Gastrocnemius medialis (tissue), 4 donors: ENCODE measurements at regions of chr2 and their contacts with region 1.

Region 1: GRCh38 chr2:54704688-54705605 is 18.5 kb upstream of the EML6 start:
- DNase-seq: no peak
- ATAC-seq: peak; percentile 80 to 87
- H3K4me3 ChIP-seq: no peak overlapping the region
- H3K27ac ChIP-seq: peak overlapping the region in 1 of 4 donors; percentile 12
- H3K4me1 ChIP-seq: no peaks in the 10 kb centered on the region
- H3K27me3 ChIP-seq: peaks cover 0 to 3% (median 0%) of the 10 kb centered on the region in 3 donors
- CTCF ChIP-seq: peak; percentile 43 to 69 (median 58)
- POLR2A ChIP-seq: no peak

Region 2: DNA sequence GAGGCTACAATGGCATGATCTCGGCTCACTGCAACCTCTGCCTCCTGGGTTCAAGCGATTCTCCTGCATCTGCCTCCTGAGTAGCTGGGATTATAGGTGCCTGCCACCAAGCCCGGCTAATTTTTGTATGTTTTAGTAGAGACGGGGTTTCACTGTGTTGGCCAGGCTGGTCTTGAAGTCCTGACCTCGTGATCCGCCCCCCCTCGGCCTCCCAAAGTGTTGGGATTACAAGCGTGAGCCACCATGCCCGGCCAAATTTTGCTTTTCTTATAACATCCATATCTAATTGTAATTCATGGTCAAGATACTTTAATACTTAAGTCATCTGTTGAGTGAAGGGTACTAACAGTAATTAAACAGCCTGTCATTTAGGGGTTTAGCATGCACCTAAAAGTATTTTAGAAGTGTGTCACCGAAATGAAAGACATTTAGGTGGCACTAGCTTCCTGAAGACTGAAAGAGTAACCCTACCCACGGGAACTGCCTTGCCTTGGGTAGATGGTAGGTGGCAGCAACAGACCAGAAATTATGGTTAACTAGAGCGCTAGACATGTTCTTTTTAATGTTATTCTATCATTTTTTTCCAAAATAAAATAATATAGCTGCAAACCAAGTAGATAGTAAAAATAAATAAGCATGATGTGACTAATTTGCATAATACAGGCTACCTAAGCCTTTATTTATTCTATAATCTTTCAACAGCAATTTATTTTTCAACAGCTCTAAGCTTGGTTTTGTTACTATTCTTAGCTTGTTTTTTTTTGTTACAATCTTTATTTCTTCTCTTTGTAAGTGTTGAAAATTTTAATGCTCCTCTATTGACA is 598.1 kb before region 1 on chr2:
- in situ Hi-C with region 1: loop called (anchors 10 to 25 kb)
- intact Hi-C with region 1: loop called (anchors 1 kb)
- DNase-seq: peak in 1 of 2 donors; percentile 34
- ATAC-seq: peak; percentile 80 to 89
- H3K4me3 ChIP-seq: peak overlapping the region in 2 of 4 donors; percentile 2 to 29
- H3K27ac ChIP-seq: no peak overlapping the region
- H3K4me1 ChIP-seq: peaks cover 10 to 18% of the 10 kb centered on the region in 2 donors
- H3K27me3 ChIP-seq: no peaks in the 10 kb centered on the region
- CTCF ChIP-seq: peak; percentile 40 to 75 (median 65)
- POLR2A ChIP-seq: no peak

Region 3: DNA sequence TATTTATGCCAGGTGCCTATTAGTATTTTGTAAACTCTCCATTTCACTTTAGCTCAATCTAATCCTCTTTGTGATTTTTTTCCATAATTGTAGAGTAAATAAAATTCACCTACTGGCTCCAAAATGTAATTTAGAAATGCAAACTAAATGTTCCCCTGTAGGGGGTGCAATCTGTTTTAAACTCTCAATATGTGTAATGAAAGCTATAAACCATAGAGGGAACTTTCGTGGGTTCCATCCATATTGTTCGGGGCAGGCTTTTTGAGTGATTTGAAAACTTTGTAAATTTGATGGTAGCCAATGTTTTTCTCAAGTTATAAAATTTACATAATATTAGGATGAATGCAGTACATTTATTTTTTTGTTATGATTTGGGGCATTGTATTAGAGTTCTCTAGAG is 498.4 kb before region 1 on chr2:
- in situ Hi-C with region 1: no loop called
- intact Hi-C with region 1: loop called (anchors 5 kb)
- DNase-seq: no peak
- ATAC-seq: no peak
- H3K4me3 ChIP-seq: no peak overlapping the region
- H3K27ac ChIP-seq: no peak overlapping the region
- H3K4me1 ChIP-seq: peaks cover 17 to 33% of the 10 kb centered on the region in 2 donors
- H3K27me3 ChIP-seq: no peaks in the 10 kb centered on the region
- CTCF ChIP-seq: peak; percentile 21 to 49 (median 44)
- POLR2A ChIP-seq: no peak

Region 4: DNA sequence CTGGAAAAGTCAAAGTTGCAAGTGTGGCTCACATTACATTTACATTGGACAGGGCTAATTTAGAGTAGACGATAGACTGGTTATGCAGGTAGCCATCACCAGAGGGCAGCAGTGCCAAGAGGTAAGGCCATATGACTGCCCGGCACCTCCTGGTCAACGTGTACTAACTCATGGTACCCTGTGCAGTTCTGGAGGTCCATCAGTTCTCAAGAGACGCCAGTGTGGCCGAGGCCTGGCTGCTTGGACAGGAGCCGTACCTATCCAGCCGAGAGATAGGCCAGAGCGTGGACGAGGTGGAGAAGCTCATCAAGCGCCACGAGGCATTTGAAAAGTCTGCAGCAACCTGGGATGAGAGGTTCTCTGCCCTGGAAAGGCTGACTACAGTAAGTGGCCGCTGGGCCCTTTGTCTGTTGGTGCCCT is 47.3 kb before region 1 on chr2:
- in situ Hi-C with region 1: loop called in 2 of 4 experiments (anchors 5 to 10 kb)
- intact Hi-C with region 1: loop called (anchors 2 kb)
- DNase-seq: peak; percentile 43 to 59
- ATAC-seq: peak; percentile 71 to 85
- H3K4me3 ChIP-seq: no peak overlapping the region
- H3K27ac ChIP-seq: peak overlapping the region; percentile 23 to 56 (median 38)
- H3K4me1 ChIP-seq: peaks cover 4 to 8% of the 10 kb centered on the region in 2 donors
- H3K27me3 ChIP-seq: no peaks in the 10 kb centered on the region
- CTCF ChIP-seq: peak; percentile 37 to 69 (median 55)
- POLR2A ChIP-seq: no peak

Region 5: DNA sequence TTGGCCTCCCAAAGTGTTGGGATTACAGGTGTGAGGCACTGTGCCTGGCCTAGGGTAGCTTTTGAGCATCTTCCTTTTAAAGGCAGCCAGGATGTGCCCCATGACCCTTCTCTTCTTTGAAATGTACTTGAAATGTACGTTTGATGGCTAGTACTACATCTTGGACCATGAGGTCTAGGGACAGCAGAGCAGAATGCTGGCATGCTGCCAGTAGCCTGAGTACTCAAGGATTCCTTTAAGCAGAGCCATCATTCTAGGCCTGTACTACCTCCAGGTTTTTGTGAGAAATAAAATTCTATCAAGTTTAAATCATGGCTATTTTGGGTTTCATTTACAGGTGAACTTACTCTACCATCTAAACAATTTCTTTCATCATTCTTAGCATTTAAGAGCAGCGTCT is 15.6 kb after region 1 on chr2:
- in situ Hi-C with region 1: no loop called
- intact Hi-C with region 1: no loop called
- DNase-seq: no peak
- ATAC-seq: no peak
- H3K4me3 ChIP-seq: no peak overlapping the region
- H3K27ac ChIP-seq: no peak overlapping the region
- H3K4me1 ChIP-seq: peaks cover 7 to 11% of the 10 kb centered on the region in 2 donors
- H3K27me3 ChIP-seq: no peaks in the 10 kb centered on the region
- CTCF ChIP-seq: no peak
- POLR2A ChIP-seq: no peak